Endothelial cell of umbilical vein (primary cell): ENCODE measurements at regions of chr10 and their contacts with region 1.

Region 1: DNA sequence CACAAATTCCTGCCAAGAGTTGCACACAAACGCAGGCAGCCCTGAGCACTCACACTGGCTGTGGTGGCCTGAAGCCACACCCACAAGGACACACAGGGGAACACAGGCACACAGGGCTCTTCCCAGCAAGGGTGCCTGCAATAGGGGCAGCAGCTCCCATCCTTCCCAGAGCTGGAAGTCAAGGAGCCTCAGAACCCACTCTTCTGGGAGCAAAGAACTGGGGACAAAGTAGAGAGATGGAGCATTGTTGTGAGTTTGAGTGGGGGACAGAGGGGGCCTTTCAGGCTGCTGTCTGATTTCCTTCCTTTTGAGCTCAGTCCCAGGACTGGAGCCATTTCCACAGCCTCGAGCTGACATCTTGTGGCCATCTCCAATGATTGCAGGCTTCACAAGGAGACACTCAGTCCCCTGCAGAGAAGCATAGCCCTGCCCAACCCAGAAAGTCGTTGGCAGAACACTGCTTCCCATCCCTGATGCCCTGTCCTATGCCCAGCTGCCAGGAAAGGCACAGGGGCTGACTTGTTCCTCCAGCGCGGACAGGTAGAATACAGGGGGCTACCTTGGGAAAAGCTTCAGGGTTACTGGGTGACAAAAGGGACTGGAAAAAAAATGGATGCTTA is 34.4 kb upstream of the SLF2 start:
- DNase-seq: peak; percentile 57
- H3K4me3 ChIP-seq: no peak overlapping the region
- H3K27ac ChIP-seq: no peak overlapping the region
- H3K4me1 ChIP-seq: peaks cover 13% of the 10 kb centered on the region
- H3K27me3 ChIP-seq: peaks cover 5 to 11% of the 10 kb centered on the region in 2 experiments
- CTCF ChIP-seq: peak; percentile 62 to 77
- POLR2A ChIP-seq: no peak

Region 2: GRCh38 chr10:100433253-100434240 is 444.9 kb before region 1 on chr10:
- CTCF ChIA-PET with region 1: interaction called, 15 read pairs
- POLR2A ChIA-PET with region 1: no interaction called
- dilution Hi-C with region 1: no loop called
- intact Hi-C with region 1: loop called (anchors 1 kb)
- DNase-seq: peak; percentile 93
- H3K4me3 ChIP-seq: no peak overlapping the region
- H3K27ac ChIP-seq: no peak overlapping the region
- H3K4me1 ChIP-seq: no peaks in the 10 kb centered on the region
- H3K27me3 ChIP-seq: peaks cover 2% of the 10 kb centered on the region in 2 experiments
- CTCF ChIP-seq: peak; percentile 91 to 100
- POLR2A ChIP-seq: no peak

Region 3: DNA sequence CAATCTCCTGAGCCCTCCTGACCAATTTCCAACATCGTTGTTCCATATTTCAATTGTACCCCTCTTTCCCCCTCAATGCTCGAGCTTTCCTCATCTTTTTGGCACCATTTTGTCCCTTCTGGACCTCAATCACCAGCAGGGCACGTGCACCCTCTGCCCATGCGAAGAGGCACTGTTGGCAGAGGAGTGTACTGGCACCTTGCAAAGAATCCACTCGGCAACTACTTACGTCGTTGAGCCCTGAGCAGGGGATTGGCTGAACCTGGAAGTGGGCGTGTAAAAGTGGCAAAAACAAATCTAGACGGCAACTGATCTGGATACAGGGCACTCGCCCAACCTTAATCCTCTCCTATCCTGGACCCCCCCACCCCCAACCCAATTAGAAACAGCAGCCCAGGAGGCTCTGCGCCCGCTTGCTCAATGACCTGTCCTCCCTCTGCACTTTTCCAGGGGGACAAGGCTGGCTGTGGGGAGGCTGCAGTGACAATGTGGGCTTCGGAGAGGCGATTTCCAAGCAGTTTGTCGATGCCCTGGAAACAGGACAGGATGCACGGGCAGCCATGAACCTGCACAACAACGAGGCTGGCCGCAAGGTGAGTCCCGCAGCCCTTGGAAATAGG is 396.8 kb before region 1 on chr10:
- CTCF ChIA-PET with region 1: interaction called, 11 read pairs
- POLR2A ChIA-PET with region 1: no interaction called
- dilution Hi-C with region 1: no loop called
- intact Hi-C with region 1: no loop called
- DNase-seq: peak; percentile 97
- H3K4me3 ChIP-seq: peak overlapping the region; percentile 13 to 48 (median 27)
- H3K27ac ChIP-seq: no peak overlapping the region
- H3K4me1 ChIP-seq: peaks cover 12% of the 10 kb centered on the region
- H3K27me3 ChIP-seq: peaks cover 35 to 40% of the 10 kb centered on the region in 2 experiments
- CTCF ChIP-seq: peak in 1 of 2 donors; percentile 2
- POLR2A ChIP-seq: no peak

Region 4: GRCh38 chr10:100562008-100562711 is 316.2 kb before region 1 on chr10:
- CTCF ChIA-PET with region 1: interaction called, 57 read pairs
- POLR2A ChIA-PET with region 1: no interaction called
- dilution Hi-C with region 1: no loop called
- intact Hi-C with region 1: loop called (anchors 1 kb)
- DNase-seq: peak; percentile 51
- H3K4me3 ChIP-seq: no peak overlapping the region
- H3K27ac ChIP-seq: no peak overlapping the region
- H3K4me1 ChIP-seq: peaks cover 2% of the 10 kb centered on the region
- H3K27me3 ChIP-seq: peaks cover 37 to 38% of the 10 kb centered on the region in 2 experiments
- CTCF ChIP-seq: peak; percentile 89 to 91
- POLR2A ChIP-seq: no peak

Region 5: DNA sequence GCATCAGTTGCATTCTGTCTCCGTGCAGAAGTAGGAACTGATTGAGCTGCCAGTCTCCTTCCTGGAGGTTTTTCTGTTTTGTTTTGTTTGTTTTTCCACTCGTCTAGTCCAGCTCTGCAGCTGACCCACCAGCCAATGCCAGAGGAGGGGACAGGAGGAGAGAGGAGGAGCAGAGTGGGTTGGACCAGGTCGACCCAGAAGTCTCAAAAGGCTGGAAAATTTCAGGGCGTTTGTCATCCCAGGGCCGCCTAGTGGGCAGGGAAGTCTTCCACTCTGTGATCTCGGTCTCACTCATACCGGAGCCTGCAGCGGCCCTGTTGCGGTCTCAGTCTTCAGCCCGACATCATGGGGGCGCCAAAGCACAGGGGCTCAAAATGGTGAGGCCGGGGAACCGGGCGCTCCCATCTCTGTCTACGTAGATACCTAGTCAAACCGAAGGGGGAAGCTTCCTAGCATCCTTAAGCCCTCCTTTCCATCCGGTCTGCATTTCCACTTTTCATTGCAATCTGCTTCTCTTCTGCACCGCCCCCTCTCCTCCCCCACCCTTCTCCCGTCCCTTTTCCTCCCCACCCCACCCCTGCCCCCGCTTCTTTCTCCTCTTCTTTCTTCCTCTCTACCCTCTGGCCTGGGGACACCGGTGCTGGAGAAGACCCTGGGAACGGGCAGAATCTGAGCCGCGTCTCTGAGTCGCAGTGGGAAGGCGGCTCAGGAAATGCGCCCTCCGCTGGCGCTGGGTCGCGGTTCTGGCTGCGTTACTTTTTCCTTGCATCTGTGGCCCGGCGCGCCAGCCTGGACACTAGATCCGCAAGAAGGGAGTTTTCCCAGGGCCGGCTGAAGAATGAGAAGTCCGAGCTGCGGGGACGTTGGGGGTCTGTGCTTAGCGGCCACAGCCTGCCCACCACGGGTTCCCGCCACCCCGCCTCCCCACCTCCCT is 149.2 kb before region 1 on chr10:
- CTCF ChIA-PET with region 1: interaction called, 4 read pairs
- POLR2A ChIA-PET with region 1: no interaction called
- dilution Hi-C with region 1: no loop called
- intact Hi-C with region 1: loop called (anchors 5 kb)
- DNase-seq: no peak
- H3K4me3 ChIP-seq: no peak overlapping the region
- H3K27ac ChIP-seq: no peak overlapping the region
- H3K4me1 ChIP-seq: no peaks in the 10 kb centered on the region
- H3K27me3 ChIP-seq: peaks cover 77 to 91% of the 10 kb centered on the region in 2 experiments
- CTCF ChIP-seq: peak in 1 of 2 donors; percentile 46
- POLR2A ChIP-seq: no peak